ENCODE measurements at regions of chrX and their contacts with region 1.

Region 1: DNA sequence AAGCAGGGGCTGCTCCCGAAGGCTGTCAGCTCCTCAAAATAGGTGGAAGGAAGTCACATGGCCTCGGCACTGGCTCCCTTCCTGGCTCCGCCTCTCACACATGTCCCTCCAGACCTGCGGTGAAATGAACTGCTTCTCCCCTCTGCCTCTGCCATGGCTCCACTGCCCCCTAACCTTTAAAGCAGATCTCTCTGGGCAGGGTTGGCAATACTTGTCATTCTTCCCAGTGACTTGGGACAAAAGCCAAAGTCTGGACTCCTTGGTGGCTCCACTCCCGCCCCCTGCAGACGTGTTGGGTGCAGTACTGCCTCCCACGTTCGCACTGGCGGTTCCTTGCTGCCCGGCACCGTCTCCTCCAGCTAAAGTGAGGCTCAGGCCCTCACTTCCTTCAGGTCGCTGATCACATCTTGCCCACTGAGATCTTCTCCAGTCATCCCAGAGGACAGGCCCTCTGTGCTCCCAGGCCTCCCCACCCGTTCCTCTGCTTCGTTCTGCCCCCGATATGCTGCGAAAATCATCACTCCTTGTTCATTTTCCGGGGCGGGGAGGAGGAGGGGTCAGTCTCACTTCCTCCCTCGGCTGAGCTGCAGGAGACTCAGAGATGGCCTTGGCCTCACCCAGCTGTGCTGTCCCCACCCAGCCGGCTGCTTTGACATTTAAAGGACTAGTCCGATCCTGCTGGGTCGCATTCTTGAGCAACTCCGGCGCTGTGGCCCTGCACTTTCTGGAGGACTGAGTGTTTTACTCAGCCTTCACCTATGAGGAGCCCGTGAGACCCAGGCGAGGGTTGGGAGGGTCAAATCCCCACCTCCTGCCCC is 97.4 kb downstream of the PHKA2 start:
- DNase-seq: peak; percentile 75
- ATAC-seq: peak; percentile 78
- H3K4me3 Mint-ChIP-seq: peak overlapping the region; percentile 68
- H3K27ac Mint-ChIP-seq: peak overlapping the region; percentile 90
- H3K4me1 Mint-ChIP-seq: peaks cover 29% of the 10 kb centered on the region
- H3K27me3 Mint-ChIP-seq: no peaks in the 10 kb centered on the region

Region 2: GRCh38 chrX:16914058-16914457 is 1972.5 kb before region 1 on chrX:
- CTCF ChIA-PET with region 1: no interaction called
- POLR2A ChIA-PET with region 1: no interaction called
- intact Hi-C with region 1: no loop called
- DNase-seq: no peak
- ATAC-seq: no peak
- H3K4me3 Mint-ChIP-seq: no peak overlapping the region
- H3K27ac Mint-ChIP-seq: no peak overlapping the region
- H3K4me1 Mint-ChIP-seq: no peaks in the 10 kb centered on the region
- H3K27me3 Mint-ChIP-seq: peaks cover 3% of the 10 kb centered on the region

Region 3: DNA sequence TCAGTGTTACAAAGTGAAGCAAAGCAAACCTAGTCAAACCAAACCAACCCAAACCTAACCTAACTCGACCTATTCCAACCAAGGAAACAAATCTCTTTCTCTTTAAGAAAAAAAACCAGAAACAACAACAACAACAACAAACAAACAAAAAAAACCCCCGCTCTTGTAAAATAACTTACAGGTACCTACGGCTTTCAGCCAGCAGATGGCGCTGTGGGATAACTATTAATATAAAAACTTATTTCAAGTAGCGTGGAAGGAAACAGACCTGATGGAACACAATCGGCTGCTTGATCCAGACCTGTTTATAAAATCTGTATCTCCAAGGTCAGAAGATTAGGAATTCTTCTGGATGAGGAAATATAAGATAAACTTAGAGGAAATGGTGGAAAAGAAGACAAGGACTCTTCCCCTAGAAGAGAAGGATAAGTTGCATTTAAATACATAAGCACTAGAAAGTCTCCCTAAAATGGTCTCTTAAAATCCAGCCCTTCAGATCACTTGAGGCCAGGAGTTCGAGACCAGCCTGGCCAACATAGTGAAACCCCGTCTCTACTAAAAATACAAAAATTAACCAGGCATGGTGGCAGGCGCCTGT is 495.5 kb before region 1 on chrX:
- CTCF ChIA-PET with region 1: no interaction called
- POLR2A ChIA-PET with region 1: no interaction called
- intact Hi-C with region 1: loop called (anchors 5 to 10 kb)
- DNase-seq: peak; percentile 71
- ATAC-seq: no peak
- H3K4me3 Mint-ChIP-seq: no peak overlapping the region
- H3K27ac Mint-ChIP-seq: no peak overlapping the region
- H3K4me1 Mint-ChIP-seq: no peaks in the 10 kb centered on the region
- H3K27me3 Mint-ChIP-seq: no peaks in the 10 kb centered on the region

Region 4: GRCh38 chrX:18425199-18426003 is 461.2 kb before region 1 on chrX and contains the start of gene CDKL5:
- CTCF ChIA-PET with region 1: interaction called, 3 read pairs
- POLR2A ChIA-PET with region 1: interaction called, 3 read pairs
- intact Hi-C with region 1: loop called (anchors 2 to 10 kb)
- DNase-seq: peak; percentile 97
- ATAC-seq: peak; percentile 96
- H3K4me3 Mint-ChIP-seq: peak within 1 kb of the TSS; percentile 79
- H3K27ac Mint-ChIP-seq: peak within 1 kb of the TSS; percentile 60
- H3K4me1 Mint-ChIP-seq: peaks cover 2% of the 10 kb centered on the region
- H3K27me3 Mint-ChIP-seq: peaks cover 2% of the 10 kb centered on the region
- total RNA-seq, gene CDKL5: 1.2 to 1.5 TPM

Region 5: DNA sequence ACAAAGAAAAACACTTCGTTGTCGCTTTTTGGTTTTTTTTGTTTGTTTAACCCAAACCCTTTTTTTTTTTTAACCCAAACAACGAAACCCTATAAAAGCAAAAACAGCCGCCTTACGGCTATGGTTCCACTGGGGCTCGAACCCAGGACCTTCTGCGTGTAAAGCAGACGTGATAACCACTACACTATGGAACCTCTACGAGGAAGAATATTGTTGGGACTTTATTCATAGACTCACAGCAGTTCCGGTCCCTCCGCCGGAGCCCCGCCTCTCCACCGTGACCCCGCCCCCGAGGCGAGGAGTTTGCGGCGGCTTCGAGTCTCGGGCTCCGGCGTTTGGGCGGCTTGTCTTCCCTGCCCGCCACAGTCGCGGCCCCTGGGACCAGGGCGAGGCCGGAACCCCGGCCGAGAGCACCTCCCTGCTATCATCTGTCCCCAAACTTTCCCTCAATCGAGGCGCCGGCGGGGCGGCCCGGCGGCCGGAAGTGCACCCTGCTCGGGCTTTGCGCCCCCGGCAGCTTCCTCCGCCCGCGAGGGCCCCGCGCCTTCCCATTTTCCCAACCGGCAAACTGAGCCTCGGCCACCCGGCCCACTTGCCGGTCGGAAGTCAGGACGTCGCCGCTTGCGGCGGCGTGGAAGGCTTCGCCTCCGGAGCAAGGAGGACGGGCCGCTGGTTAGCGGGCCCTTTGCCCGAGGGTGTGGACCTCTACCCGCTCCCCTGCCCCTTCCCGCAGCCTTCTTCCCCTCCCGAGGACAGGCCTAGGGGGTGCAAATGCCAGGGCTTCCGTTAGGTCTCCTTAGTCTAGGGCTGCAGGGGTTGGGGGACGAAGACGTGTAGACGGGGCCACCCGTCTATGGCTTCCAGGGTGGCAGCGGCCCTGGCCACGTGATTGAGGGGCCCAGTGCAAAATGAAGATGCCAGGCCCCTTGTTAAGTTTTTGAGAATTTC is 211.5 kb before region 1 on chrX:
- CTCF ChIA-PET with region 1: no interaction called
- POLR2A ChIA-PET with region 1: no interaction called
- intact Hi-C with region 1: loop called in 1 of 2 experiments (anchors 1 kb)
- DNase-seq: peak; percentile 82
- ATAC-seq: peak; percentile 81
- H3K4me3 Mint-ChIP-seq: peak overlapping the region; percentile 63
- H3K27ac Mint-ChIP-seq: peak overlapping the region; percentile 80
- H3K4me1 Mint-ChIP-seq: peaks cover 6% of the 10 kb centered on the region
- H3K27me3 Mint-ChIP-seq: no peaks in the 10 kb centered on the region

Region 6: GRCh38 chrX:18855919-18856644 is 30.5 kb before region 1 on chrX:
- CTCF ChIA-PET with region 1: no interaction called
- POLR2A ChIA-PET with region 1: no interaction called
- intact Hi-C with region 1: loop called in 1 of 2 experiments (anchors 1 kb)
- DNase-seq: no peak
- ATAC-seq: peak; percentile 71
- H3K4me3 Mint-ChIP-seq: no peak overlapping the region
- H3K27ac Mint-ChIP-seq: no peak overlapping the region
- H3K4me1 Mint-ChIP-seq: peaks cover 32% of the 10 kb centered on the region
- H3K27me3 Mint-ChIP-seq: no peaks in the 10 kb centered on the region

Region 7: DNA sequence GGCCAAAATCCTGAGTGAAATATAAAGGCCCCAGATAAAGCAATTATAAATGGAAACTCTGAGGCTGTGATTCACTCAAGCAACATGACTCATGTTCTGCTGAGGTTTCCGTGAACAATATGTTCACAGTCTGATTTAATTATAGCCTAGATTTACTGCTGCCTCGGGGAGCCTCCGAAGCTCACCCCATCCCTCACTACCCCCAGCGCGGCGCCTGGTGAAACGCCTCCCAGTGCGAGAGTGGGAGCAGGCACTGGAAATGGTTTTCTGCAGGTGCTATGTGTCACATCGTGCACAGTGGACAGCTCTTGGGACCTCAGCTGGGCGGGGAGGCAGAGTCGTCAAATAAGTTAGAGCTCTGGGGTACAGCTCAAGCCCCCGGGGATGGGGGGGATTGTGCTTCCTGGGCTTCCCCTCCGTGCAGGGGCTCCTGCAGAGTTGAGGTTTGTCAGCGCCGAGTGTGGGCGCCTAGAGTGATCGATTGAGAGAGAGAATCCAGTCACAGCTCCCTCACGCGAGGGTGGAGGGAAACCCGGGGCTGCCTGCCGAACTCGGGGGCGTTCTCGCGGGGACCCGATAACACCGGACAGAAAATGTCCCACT is 13.3 kb before region 1 on chrX:
- CTCF ChIA-PET with region 1: no interaction called
- POLR2A ChIA-PET with region 1: no interaction called
- intact Hi-C with region 1: loop called in 1 of 2 experiments (anchors 1 kb)
- DNase-seq: peak; percentile 29
- ATAC-seq: peak; percentile 94
- H3K4me3 Mint-ChIP-seq: no peak overlapping the region
- H3K27ac Mint-ChIP-seq: no peak overlapping the region
- H3K4me1 Mint-ChIP-seq: peaks cover 8% of the 10 kb centered on the region
- H3K27me3 Mint-ChIP-seq: peaks cover 3% of the 10 kb centered on the region

Measured in activated CD4-positive, alpha-beta T cell treated with anti-CD3 and anti-CD28 coated beads for 36 hours (primary cell).